ENCODE measurements at regions of chr22 and their contacts with region 1.

Region 1: GRCh38 chr22:25979968-25980367 is 189.3 kb upstream of the SEZ6L start:
- DNase-seq: no peak
- ATAC-seq: no peak
- H3K4me3 ChIP-seq: no peak overlapping the region
- H3K27ac ChIP-seq: no peak overlapping the region
- H3K4me1 ChIP-seq: no peaks in the 10 kb centered on the region
- H3K27me3 ChIP-seq: no peaks in the 10 kb centered on the region
- CTCF ChIP-seq: no peak

Region 2: GRCh38 chr22:25950111-25950510 is 29.9 kb before region 1 on chr22:
- CTCF ChIA-PET with region 1: no interaction called
- POLR2A ChIA-PET with region 1: no interaction called
- in situ Hi-C with region 1: no loop called
- intact Hi-C with region 1: no loop called
- DNase-seq: no peak
- ATAC-seq: no peak
- H3K4me3 ChIP-seq: no peak overlapping the region
- H3K27ac ChIP-seq: no peak overlapping the region
- H3K4me1 ChIP-seq: no peaks in the 10 kb centered on the region
- H3K27me3 ChIP-seq: no peaks in the 10 kb centered on the region
- CTCF ChIP-seq: no peak

Region 3: GRCh38 chr22:26008587-26008986 is 28.6 kb after region 1 on chr22:
- CTCF ChIA-PET with region 1: no interaction called
- POLR2A ChIA-PET with region 1: no interaction called
- in situ Hi-C with region 1: no loop called
- intact Hi-C with region 1: no loop called
- DNase-seq: no peak
- ATAC-seq: no peak
- H3K4me3 ChIP-seq: no peak overlapping the region
- H3K27ac ChIP-seq: no peak overlapping the region
- H3K4me1 ChIP-seq: no peaks in the 10 kb centered on the region
- H3K27me3 ChIP-seq: no peaks in the 10 kb centered on the region
- CTCF ChIP-seq: no peak

Region 4: GRCh38 chr22:26124991-26125725 is 145.2 kb after region 1 on chr22:
- CTCF ChIA-PET with region 1: no interaction called
- POLR2A ChIA-PET with region 1: no interaction called
- in situ Hi-C with region 1: no loop called
- intact Hi-C with region 1: no loop called
- DNase-seq: no peak
- ATAC-seq: no peak
- H3K4me3 ChIP-seq: no peak overlapping the region
- H3K27ac ChIP-seq: no peak overlapping the region
- H3K4me1 ChIP-seq: no peaks in the 10 kb centered on the region
- H3K27me3 ChIP-seq: peaks cover 5% of the 10 kb centered on the region
- CTCF ChIP-seq: no peak

Region 5: GRCh38 chr22:26287382-26288225 is 307.6 kb after region 1 on chr22:
- CTCF ChIA-PET with region 1: no interaction called
- POLR2A ChIA-PET with region 1: no interaction called
- in situ Hi-C with region 1: no loop called
- intact Hi-C with region 1: no loop called
- DNase-seq: no peak
- ATAC-seq: no peak
- H3K4me3 ChIP-seq: no peak overlapping the region
- H3K27ac ChIP-seq: no peak overlapping the region
- H3K4me1 ChIP-seq: no peaks in the 10 kb centered on the region
- H3K27me3 ChIP-seq: no peaks in the 10 kb centered on the region; the same call in 1 of the 2 replicates
- CTCF ChIP-seq: no peak

Region 6: DNA sequence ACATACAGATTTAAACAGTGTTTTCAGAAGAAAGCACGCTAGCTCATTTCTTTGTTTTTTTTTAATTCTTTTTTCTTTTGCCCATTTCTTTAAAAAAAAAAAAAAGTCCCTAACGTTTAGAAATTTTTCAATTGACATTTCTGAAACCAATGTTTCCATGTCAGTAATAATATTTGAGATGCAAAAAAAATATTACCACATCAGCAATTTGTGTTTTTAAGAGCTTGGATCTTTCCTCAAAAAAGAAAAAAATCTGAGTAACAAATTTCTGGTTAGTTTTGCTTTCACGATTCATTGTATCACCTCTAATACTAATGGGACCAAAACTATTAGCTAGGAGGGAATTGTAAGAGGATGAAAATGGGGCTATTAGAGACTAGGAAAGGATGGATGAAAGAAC is 409.2 kb after region 1 on chr22:
- CTCF ChIA-PET with region 1: no interaction called
- POLR2A ChIA-PET with region 1: interaction called, 10 read pairs
- in situ Hi-C with region 1: no loop called
- intact Hi-C with region 1: no loop called
- DNase-seq: no peak
- ATAC-seq: no peak
- H3K4me3 ChIP-seq: no peak overlapping the region
- H3K27ac ChIP-seq: no peak overlapping the region
- H3K4me1 ChIP-seq: no peaks in the 10 kb centered on the region
- H3K27me3 ChIP-seq: no peaks in the 10 kb centered on the region; the same call in 1 of the 2 replicates
- CTCF ChIP-seq: no peak